ENCODE measurements at regions of chr14 and their contacts with region 1.

Region 1: GRCh38 chr14:23006544-23007419 is 3.2 kb downstream of the C14orf93 start:
- DNase-seq: peak; percentile 94 to 99 (median 97)
- ATAC-seq: peak; percentile 95 to 96
- H3K4me3 Mint-ChIP-seq: peak overlapping the region; percentile 93 to 98 (median 94)
- H3K27ac Mint-ChIP-seq: peak overlapping the region; percentile 92 to 98 (median 97)
- H3K4me1 Mint-ChIP-seq: peaks cover 16 to 50% (median 41%) of the 10 kb centered on the region in 4 donors
- H3K27me3 Mint-ChIP-seq: no peaks in the 10 kb centered on the region

Region 2: GRCh38 chr14:22986508-22987054 is 20.2 kb before region 1 on chr14:
- POLR2A ChIA-PET with region 1: interaction called, 16 read pairs
- DNase-seq: peak; percentile 73 to 93 (median 84)
- ATAC-seq: peak; percentile 59 to 69
- H3K4me3 Mint-ChIP-seq: no peak overlapping the region
- H3K27ac Mint-ChIP-seq: peak overlapping the region in 1 of 10 donors; percentile 25
- H3K4me1 Mint-ChIP-seq: peaks cover 0 to 2% (median 0%) of the 10 kb centered on the region in 4 donors
- H3K27me3 Mint-ChIP-seq: no peaks in the 10 kb centered on the region

Region 3: GRCh38 chr14:23025151-23025814 is 18.5 kb after region 1 on chr14:
- POLR2A ChIA-PET with region 1: interaction called, 18 read pairs
- DNase-seq: no peak
- ATAC-seq: no peak
- H3K4me3 Mint-ChIP-seq: peak overlapping the region in 2 of 10 donors; percentile 2 to 39
- H3K27ac Mint-ChIP-seq: peak overlapping the region in 7 of 10 donors; percentile 37 to 89 (median 63)
- H3K4me1 Mint-ChIP-seq: peaks cover 40 to 70% (median 59%) of the 10 kb centered on the region in 4 donors
- H3K27me3 Mint-ChIP-seq: no peaks in the 10 kb centered on the region

Region 4: DNA sequence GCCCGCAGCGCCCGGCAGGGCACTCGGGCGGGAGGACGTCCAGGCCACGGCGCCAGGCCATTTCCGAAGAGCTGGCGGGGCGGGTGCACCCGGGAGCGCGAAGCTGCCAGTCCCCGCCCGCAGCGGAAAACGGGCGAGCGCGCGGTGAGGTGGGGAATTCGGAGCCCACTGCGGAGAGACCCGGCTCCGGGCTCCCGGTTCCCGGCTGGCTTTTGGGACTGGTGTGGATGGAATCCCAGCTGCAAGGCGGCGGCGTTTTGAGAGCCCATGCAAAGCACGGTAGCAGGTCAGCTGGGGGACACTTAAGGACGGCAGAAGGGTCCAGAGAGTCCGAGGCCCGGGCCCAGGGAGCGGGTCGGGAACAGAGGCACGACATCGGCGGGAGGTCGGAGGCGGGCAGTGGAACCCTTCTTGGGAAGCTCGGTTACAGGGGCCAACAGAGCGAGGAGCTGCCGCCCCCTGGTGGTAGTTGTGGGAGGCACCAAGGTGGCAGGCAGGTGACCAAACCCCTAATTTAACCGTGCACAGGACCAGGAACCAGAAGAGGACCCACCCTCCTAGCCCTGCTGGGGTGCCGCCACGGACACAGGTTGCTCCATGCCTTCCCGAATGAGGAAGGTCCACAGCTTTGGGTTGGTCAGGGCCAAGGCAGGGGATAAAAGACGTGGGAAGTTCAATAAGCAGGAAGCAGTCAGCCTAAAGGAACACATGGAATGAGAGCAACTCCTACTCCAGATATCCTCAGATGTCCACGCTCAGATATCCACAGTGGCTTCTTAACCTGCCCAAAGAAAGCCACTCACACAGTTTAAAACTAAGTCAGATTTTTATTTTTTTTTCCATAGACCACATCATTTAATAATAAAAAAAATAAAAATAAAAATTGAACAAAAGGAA is 51.2 kb after region 1 on chr14:
- POLR2A ChIA-PET with region 1: interaction called, 20 read pairs
- DNase-seq: peak; percentile 73 to 90 (median 84)
- ATAC-seq: peak; percentile 73 to 75
- H3K4me3 Mint-ChIP-seq: peak overlapping the region; percentile 79 to 90 (median 88)
- H3K27ac Mint-ChIP-seq: peak overlapping the region in 8 of 10 donors; percentile 24 to 80 (median 66)
- H3K4me1 Mint-ChIP-seq: peaks cover 15 to 21% (median 20%) of the 10 kb centered on the region in 4 donors
- H3K27me3 Mint-ChIP-seq: no peaks in the 10 kb centered on the region

Region 5: DNA sequence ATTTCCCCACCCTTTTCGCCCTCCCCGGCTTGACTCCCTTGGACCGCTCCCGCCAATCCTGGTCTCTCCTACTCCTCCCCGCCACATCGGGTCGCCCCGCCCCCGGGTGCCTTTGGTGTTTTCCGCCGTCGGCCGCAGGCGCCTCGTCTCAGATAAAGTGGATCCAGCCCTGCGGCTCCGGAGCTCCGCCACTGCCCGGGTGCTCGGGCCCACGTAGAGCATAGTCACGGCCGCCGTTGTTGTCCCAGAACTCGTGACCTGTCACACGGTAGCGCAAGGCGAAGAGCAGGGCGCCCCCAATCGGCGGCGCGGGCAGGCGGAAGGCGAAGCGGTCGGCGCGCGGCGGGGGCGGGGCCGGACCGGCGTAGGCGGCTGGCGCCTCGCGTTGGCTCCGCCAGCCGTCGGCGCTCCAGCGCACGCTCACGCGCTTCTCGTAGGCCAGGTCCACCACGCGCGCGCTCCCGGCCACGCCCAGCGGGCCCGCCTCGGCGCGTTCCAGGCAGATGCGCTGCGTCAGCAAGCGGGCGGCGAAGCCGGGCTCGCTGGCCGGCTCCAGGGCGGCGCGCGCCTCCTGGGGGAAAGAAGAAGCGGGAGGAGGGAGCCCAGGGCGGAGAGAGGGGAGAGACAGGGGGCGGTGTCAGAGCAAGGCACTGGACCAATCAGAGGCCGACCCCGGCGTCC is 294.6 kb after region 1 on chr14:
- POLR2A ChIA-PET with region 1: interaction called, 14 read pairs
- DNase-seq: peak; percentile 95 to 99 (median 97)
- ATAC-seq: peak; percentile 68 to 74
- H3K4me3 Mint-ChIP-seq: peak overlapping the region; percentile 86 to 100 (median 94)
- H3K27ac Mint-ChIP-seq: peak overlapping the region; percentile 84 to 99 (median 95)
- H3K4me1 Mint-ChIP-seq: peaks cover 11 to 39% (median 32%) of the 10 kb centered on the region in 4 donors
- H3K27me3 Mint-ChIP-seq: peaks cover 0 to 13% (median 11%) of the 10 kb centered on the region in 5 donors

Measured in naive thymus-derived CD8-positive, alpha-beta T cell (primary cell).